ENCODE measurements at regions of chr1 and their contacts with region 1.

Region 1: GRCh38 chr1:59422921-59423575 is 126.2 kb downstream of the FGGY start:
- DNase-seq: peak; percentile 60 to 87
- ATAC-seq: peak; percentile 36 to 74
- H3K4me3 ChIP-seq: no peak overlapping the region
- H3K27ac ChIP-seq: peak overlapping the region; percentile 71 to 90 (median 88)
- H3K4me1 ChIP-seq: peaks cover 64 to 66% of the 10 kb centered on the region in 2 donors
- H3K27me3 ChIP-seq: no peaks in the 10 kb centered on the region
- CTCF ChIP-seq: no peak
- POLR2A ChIP-seq: no peak

Region 2: DNA sequence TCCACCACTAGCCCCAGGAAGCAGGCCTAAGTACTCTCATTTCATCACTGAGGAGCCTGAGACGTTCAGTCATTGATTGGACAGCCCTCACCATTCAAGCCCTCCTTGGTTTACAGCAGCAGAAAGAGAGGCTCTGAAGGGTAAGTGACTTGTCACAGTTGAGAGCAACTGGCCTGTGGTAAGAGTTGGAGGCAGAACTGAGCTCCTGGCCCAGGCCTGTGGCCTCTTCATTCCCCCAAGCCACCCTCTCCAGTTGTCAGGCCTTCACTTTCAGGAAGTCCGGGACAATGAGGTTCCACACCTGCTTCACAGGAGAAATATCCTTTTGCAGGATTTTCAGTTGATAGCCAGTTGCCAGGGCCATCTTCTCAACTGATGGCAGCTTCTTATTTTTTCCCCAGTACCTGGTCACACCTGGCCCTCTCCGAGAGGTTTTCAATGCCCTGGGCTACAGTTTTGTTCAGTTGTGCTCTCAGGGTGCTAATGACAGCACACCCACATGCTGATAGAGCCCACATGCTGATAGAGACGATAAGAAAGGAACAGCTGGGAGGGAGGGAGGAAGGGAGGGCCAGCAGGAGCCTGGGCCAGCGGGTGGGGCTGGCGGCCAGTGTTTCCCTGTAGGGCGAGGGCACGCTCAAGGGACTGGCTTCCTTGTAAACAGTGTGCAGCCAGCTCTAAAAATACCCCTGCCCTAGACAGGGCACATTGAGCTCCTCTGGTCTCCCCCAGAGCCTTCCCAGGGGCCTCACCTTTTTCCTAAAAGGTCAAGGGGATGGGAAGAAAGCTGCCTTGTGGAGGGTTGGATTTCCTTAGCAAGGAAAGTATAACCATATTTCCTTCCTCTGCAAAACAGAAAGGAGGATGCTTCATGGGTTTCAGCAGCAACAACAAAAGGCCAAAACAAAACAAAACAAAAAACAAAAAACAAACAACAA is 526.5 kb before region 1 on chr1:
- in situ Hi-C with region 1: loop called in 1 of 4 experiments (anchors 10 kb)
- intact Hi-C with region 1: loop called (anchors 5 kb)
- DNase-seq: peak; percentile 84 to 90
- ATAC-seq: peak; percentile 77 to 82
- H3K4me3 ChIP-seq: no peak overlapping the region
- H3K27ac ChIP-seq: peak overlapping the region; percentile 94 to 100 (median 94)
- H3K4me1 ChIP-seq: peaks cover 86% of the 10 kb centered on the region in 2 donors
- H3K27me3 ChIP-seq: no peaks in the 10 kb centered on the region
- CTCF ChIP-seq: no peak
- POLR2A ChIP-seq: peak in 1 of 2 donors; percentile 24

Region 3: DNA sequence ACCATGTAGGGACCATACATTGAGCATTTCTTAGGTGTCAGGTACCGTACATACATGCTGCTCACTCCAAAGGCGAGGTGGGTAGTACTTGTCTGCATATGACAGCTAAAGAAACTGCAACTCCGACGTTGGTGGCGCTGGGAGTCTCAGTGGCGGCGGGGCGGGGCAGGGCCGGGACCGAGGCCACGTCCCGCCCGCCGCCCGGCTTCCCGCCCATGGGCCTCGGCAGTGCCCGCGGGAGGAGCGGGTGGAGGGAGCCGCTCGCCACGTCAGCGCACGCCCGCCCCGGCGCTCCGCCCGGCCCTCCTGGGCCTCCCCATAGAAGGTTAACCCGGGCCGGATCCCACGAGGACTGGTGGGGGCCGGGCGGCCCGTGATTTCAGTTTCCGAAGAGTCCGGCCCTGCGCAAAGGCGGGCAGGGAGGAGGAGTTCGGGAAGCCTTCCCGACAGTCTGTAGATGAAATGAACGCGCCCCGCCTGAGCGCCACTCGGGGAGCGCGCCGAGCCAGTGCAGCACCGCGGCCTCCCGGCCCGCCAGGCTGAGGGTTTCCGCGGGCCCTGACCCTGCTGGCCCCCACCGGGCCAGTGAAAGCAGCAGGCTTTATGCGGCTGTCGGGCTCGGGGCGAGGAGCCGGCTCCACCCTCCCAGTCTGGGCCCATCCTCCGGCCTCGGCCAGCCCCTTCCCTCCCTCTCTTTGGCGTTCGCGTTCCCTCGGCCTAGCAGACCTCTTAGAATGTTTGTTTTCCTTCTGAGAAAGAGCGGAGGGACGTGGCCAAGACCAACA is 519.3 kb before region 1 on chr1:
- in situ Hi-C with region 1: loop called in 1 of 4 experiments (anchors 10 kb)
- intact Hi-C with region 1: loop called (anchors 5 kb)
- DNase-seq: peak; percentile 86 to 93
- ATAC-seq: peak; percentile 69 to 81
- H3K4me3 ChIP-seq: peak overlapping the region; percentile 53 to 82 (median 60)
- H3K27ac ChIP-seq: peak overlapping the region; percentile 94 to 100 (median 94)
- H3K4me1 ChIP-seq: peaks cover 52 to 54% of the 10 kb centered on the region in 2 donors
- H3K27me3 ChIP-seq: no peaks in the 10 kb centered on the region
- CTCF ChIP-seq: no peak
- POLR2A ChIP-seq: peak; percentile 82 to 91

Region 4: GRCh38 chr1:59384443-59384842 is 38.6 kb before region 1 on chr1:
- in situ Hi-C with region 1: no loop called
- intact Hi-C with region 1: no loop called
- DNase-seq: no peak
- ATAC-seq: no peak
- H3K4me3 ChIP-seq: no peak overlapping the region
- H3K27ac ChIP-seq: no peak overlapping the region
- H3K4me1 ChIP-seq: no peaks in the 10 kb centered on the region
- H3K27me3 ChIP-seq: no peaks in the 10 kb centered on the region
- CTCF ChIP-seq: no peak
- POLR2A ChIP-seq: no peak

Region 5: DNA sequence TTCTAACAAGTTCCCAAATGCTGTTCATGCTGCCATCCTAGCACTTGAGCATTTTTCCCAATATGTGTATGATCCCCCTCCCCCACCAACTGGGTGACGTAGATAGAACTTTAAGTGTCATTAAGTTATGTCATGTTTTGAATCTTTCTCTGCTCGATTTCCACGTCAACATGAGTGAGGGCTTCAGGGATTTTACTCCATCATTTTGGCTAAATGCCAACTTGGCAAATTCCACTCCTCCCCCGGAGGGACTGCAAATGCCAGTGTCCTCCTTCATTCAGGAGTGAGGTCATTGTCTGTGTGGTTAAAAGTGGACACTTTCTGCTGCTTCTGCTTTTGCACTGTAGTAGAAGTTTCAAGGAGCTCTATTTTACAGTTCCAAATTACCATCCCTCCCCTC is 75.6 kb after region 1 on chr1:
- in situ Hi-C with region 1: no loop called
- intact Hi-C with region 1: loop called (anchors 5 kb)
- DNase-seq: no peak
- ATAC-seq: peak; percentile 40 to 49
- H3K4me3 ChIP-seq: no peak overlapping the region
- H3K27ac ChIP-seq: peak overlapping the region; percentile 68 to 77 (median 70)
- H3K4me1 ChIP-seq: peaks cover 18 to 27% of the 10 kb centered on the region in 2 donors
- H3K27me3 ChIP-seq: no peaks in the 10 kb centered on the region
- CTCF ChIP-seq: no peak
- POLR2A ChIP-seq: no peak

Region 6: DNA sequence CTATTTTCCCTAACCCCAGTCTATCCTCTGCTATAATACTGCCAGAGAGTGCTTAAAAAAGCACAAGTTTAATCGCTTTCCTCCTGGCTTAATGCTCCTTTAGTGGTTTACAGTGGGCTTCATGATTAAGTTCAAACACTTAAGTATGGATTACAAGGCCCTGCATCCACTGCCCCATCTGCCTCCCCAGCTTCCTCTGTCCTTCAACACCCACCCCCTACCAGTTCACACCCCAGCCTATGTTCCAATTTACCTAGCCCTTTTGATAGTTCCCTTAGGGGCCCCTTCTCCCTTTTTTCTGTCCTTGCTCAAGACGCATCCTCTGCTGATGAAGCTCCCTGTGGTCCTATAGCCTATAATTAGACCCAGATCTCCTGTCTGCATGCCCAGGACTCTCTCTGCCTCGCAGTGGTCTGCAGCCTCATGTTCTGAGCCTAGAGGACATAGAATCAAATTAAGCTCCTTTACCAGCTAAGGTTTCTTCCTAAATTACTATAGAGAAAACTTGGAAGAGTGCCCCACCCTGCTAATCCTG is 86.4 kb after region 1 on chr1:
- in situ Hi-C with region 1: no loop called
- intact Hi-C with region 1: no loop called
- DNase-seq: no peak
- ATAC-seq: no peak
- H3K4me3 ChIP-seq: no peak overlapping the region
- H3K27ac ChIP-seq: no peak overlapping the region
- H3K4me1 ChIP-seq: peaks cover 29 to 35% of the 10 kb centered on the region in 2 donors
- H3K27me3 ChIP-seq: no peaks in the 10 kb centered on the region
- CTCF ChIP-seq: no peak
- POLR2A ChIP-seq: no peak

Region 7: GRCh38 chr1:59596441-59596861 is 173.4 kb after region 1 on chr1:
- in situ Hi-C with region 1: no loop called
- intact Hi-C with region 1: loop called (anchors 5 kb)
- DNase-seq: peak in 1 of 2 donors; percentile 59
- ATAC-seq: peak; percentile 8 to 31
- H3K4me3 ChIP-seq: no peak overlapping the region
- H3K27ac ChIP-seq: peak overlapping the region; percentile 84 to 91 (median 86)
- H3K4me1 ChIP-seq: peaks cover 62 to 75% of the 10 kb centered on the region in 2 donors
- H3K27me3 ChIP-seq: no peaks in the 10 kb centered on the region
- CTCF ChIP-seq: no peak
- POLR2A ChIP-seq: no peak

Region 8: GRCh38 chr1:59682396-59683080 is 259.5 kb after region 1 on chr1:
- in situ Hi-C with region 1: loop called in 1 of 4 experiments (anchors 25 kb)
- intact Hi-C with region 1: loop called (anchors 2 kb)
- DNase-seq: peak; percentile 62 to 76
- ATAC-seq: peak; percentile 65 to 73
- H3K4me3 ChIP-seq: no peak overlapping the region
- H3K27ac ChIP-seq: peak overlapping the region; percentile 85 to 89 (median 87)
- H3K4me1 ChIP-seq: peaks cover 57 to 77% of the 10 kb centered on the region in 2 donors
- H3K27me3 ChIP-seq: no peaks in the 10 kb centered on the region
- CTCF ChIP-seq: no peak
- POLR2A ChIP-seq: peak in 1 of 2 donors; percentile 60